Activated B cell treated with CpG ODN at 0.5 μM for 24 hours (primary cell): ENCODE measurements at regions of chrX and their contacts with region 1.

Region 1: GRCh38 chrX:79167462-79167861 is 23.0 kb downstream of the GPR174 start:
- DNase-seq: no peak
- ATAC-seq: peak; percentile 35
- H3K4me3 Mint-ChIP-seq: peak overlapping the region; percentile 50
- H3K27ac Mint-ChIP-seq: peak overlapping the region; percentile 85
- H3K4me1 Mint-ChIP-seq: peaks cover 80% of the 10 kb centered on the region
- H3K27me3 Mint-ChIP-seq: no peaks in the 10 kb centered on the region
- CTCF ChIP-seq: no peak

Region 2: GRCh38 chrX:78048052-78048451 is 1119.4 kb before region 1 on chrX:
- CTCF ChIA-PET with region 1: no interaction called
- POLR2A ChIA-PET with region 1: no interaction called
- intact Hi-C with region 1: no loop called
- DNase-seq: no peak
- ATAC-seq: no peak
- H3K4me3 Mint-ChIP-seq: no peak overlapping the region
- H3K27ac Mint-ChIP-seq: no peak overlapping the region
- H3K4me1 Mint-ChIP-seq: no peaks in the 10 kb centered on the region
- H3K27me3 Mint-ChIP-seq: no peaks in the 10 kb centered on the region
- CTCF ChIP-seq: no peak

Region 3: GRCh38 chrX:79117078-79117477 is 50.4 kb before region 1 on chrX:
- CTCF ChIA-PET with region 1: no interaction called
- POLR2A ChIA-PET with region 1: no interaction called
- intact Hi-C with region 1: no loop called
- DNase-seq: no peak
- ATAC-seq: peak; percentile 25
- H3K4me3 Mint-ChIP-seq: no peak overlapping the region
- H3K27ac Mint-ChIP-seq: no peak overlapping the region
- H3K4me1 Mint-ChIP-seq: peaks cover 6% of the 10 kb centered on the region
- H3K27me3 Mint-ChIP-seq: no peaks in the 10 kb centered on the region
- CTCF ChIP-seq: no peak

Region 4: DNA sequence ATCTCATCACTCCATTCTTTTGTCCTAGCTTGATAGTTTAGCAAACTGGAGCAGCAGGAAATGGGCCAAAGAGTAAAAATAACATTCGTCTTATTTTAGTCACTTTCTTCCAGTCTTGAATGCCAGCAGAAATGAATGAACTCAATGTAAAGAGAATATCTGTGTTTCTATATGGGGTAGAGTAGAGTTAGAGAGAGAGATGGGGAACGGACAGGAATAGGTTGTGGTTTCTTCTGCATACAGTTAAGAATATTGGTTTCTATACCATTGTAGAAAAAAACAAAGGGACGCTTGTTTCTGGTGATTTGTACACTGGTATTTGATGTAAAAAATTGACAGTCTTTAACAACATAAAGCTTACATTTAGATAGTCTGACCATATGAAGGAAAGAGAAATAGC is 14.1 kb before region 1 on chrX:
- CTCF ChIA-PET with region 1: no interaction called
- POLR2A ChIA-PET with region 1: interaction called, 11 read pairs
- intact Hi-C with region 1: loop called (anchors 2 kb)
- DNase-seq: no peak
- ATAC-seq: no peak
- H3K4me3 Mint-ChIP-seq: peak overlapping the region; percentile 67
- H3K27ac Mint-ChIP-seq: peak overlapping the region; percentile 88
- H3K4me1 Mint-ChIP-seq: peaks cover 80% of the 10 kb centered on the region
- H3K27me3 Mint-ChIP-seq: no peaks in the 10 kb centered on the region
- CTCF ChIP-seq: no peak

Region 5: DNA sequence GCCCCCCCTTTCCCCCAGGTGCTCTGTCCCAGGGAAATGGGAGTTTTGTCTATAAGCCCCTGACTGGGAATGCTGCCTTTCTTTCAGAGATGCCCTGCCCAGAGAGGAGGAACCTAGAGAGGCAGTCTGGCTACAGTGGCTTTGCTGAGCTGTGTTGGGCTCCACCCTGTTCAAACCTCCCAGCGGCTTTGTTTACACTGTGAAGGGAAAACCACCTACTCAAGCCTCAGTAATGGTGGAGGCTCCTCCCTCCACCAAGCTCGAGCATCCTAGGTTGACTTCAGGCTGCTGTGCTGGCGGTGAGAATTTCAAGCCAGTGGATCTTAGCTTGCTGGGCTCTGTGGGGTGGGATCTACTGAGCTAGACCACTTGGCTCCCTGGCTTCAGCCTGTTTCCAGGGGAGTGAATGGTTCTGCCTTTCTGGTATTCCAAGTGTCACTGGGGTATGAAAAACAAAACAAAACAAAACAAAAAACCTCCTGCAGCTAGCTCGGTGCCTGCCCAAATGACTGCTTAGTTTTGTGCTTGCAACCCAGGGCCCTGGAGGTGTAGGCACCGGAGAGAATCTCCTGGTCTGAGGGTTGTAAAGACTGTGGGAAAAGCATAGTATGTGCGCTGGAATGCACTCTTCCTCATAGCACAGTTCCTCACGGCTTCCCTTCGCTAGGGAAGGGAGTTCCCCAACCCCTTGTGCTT is 157.9 kb after region 1 on chrX:
- CTCF ChIA-PET with region 1: no interaction called
- POLR2A ChIA-PET with region 1: no interaction called
- intact Hi-C with region 1: no loop called
- DNase-seq: no peak
- ATAC-seq: no peak
- H3K4me3 Mint-ChIP-seq: no peak overlapping the region
- H3K27ac Mint-ChIP-seq: no peak overlapping the region
- H3K4me1 Mint-ChIP-seq: no peaks in the 10 kb centered on the region
- H3K27me3 Mint-ChIP-seq: no peaks in the 10 kb centered on the region
- CTCF ChIP-seq: no peak